GM18951 (cell line): ENCODE measurements at regions of chr2 and their contacts with region 1.

Region 1: GRCh38 chr2:232511336-232511888 is 8.8 kb upstream of the PRSS56 start:
- POLR2A ChIP-seq: no peak

Region 2: GRCh38 chr2:232444409-232445148 is 66.8 kb before region 1 on chr2:
- in situ Hi-C with region 1: loop called (anchors 10 kb)
- POLR2A ChIP-seq: no peak